ENCODE measurements at regions of chr3 and their contacts with region 1.

Region 1: DNA sequence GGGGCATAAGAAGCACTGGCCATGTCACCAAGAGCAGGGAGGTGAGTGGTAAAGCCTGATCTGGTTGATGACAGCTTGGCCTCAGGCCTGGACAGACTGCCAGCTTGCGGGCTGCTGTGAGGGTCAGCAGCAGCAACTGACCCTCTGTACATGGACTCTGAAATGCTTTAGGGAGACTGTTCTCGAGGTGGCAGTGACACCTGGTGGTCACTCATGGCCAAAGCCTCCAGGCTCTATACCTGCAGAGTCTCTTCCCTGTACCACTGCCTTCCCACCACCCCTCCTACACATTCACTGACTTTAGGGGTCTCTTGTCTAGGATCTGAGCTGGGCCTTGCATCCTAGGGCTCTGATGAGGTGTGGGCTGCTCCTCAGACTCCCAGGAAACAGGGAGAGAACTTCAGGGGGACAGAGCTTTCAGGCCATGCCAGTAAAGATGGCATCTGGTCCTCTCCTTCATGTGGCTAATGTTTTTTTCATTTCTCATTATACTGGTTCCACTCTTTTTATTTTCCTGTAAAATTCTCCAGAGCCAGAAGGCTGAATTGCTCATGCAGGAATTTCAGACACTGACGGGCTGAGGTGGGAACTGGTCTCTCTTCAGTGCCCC is 17.2 kb upstream of the TIMP4 start:
- DNase-seq: peak; percentile 50
- ATAC-seq: peak; percentile 92
- H3K4me3 ChIP-seq: no peak overlapping the region
- H3K27ac ChIP-seq: no peak overlapping the region
- H3K4me1 ChIP-seq: peaks cover 12% of the 10 kb centered on the region
- H3K27me3 ChIP-seq: no peaks in the 10 kb centered on the region
- CTCF ChIP-seq: peak; percentile 77
- POLR2A ChIP-seq: no peak
- RAD21 ChIP-seq: peak; percentile 88

Region 2: DNA sequence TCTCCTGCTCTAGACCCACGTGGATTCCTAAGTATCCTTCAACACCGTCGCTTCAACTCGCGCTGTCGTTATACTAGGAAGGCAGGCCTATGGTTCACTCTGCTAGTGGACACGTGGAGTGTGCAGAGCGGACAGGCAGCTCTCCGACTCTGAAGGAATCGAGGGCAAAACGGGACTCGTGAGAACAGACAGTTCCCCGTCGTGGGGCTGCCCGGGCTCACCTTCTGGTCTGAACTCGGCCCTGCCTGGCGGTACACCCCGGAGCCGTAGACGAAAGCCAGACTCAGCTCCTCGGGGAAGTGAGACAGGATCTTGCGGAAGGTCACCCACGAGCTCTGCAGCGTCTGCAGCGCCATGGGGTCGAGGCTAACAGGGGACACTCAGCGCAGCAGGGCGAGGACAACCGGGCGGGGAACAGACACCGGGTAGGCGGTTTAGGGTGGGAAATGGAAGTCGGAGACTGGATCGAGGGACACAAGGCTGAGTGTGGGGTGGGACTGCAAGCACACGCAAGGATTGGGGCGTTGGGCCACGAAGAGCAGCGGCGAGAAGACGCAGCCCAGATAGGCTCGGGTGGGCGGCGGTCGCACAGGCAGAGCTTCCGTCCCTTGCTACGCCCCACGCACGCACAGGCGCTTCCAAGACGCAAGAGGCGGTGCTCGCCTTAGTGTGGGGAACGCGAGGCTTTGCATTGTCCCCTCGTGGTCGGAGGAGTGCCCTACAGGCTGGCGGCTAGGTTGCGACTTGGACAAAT is 329.5 kb before region 1 on chr3 and contains the start of gene TAMM41:
- CTCF ChIA-PET with region 1: no interaction called
- POLR2A ChIA-PET with region 1: no interaction called
- dilution Hi-C with region 1: no loop called
- in situ Hi-C with region 1: no loop called
- intact Hi-C with region 1: loop called (anchors 5 kb)
- DNase-seq: peak; percentile 87
- ATAC-seq: peak; percentile 100
- H3K4me3 ChIP-seq: peak within 1 kb of the TSS; percentile 89
- H3K27ac ChIP-seq: peak within 1 kb of the TSS; percentile 94
- H3K4me1 ChIP-seq: peaks cover 5% of the 10 kb centered on the region
- H3K27me3 ChIP-seq: peaks cover 2% of the 10 kb centered on the region; the same call in 1 of the 2 replicates
- CTCF ChIP-seq: peak; percentile 80
- POLR2A ChIP-seq: peak; percentile 49; the same call in 1 of the 2 replicates
- RAD21 ChIP-seq: peak; percentile 37
- total RNA-seq, gene TAMM41: 3.9 and 4.3 TPM in 2 replicates

Region 3: GRCh38 chr3:12143949-12144504 is 31.9 kb before region 1 on chr3:
- CTCF ChIA-PET with region 1: interaction called, 25 read pairs
- POLR2A ChIA-PET with region 1: no interaction called
- dilution Hi-C with region 1: no loop called
- in situ Hi-C with region 1: loop called (anchors 5 kb)
- intact Hi-C with region 1: loop called (anchors 1 kb)
- DNase-seq: peak; percentile 81
- ATAC-seq: peak; percentile 87
- H3K4me3 ChIP-seq: no peak overlapping the region
- H3K27ac ChIP-seq: peak overlapping the region; percentile 2; the same call in 1 of the 2 replicates
- H3K4me1 ChIP-seq: peaks cover 4% of the 10 kb centered on the region
- H3K27me3 ChIP-seq: peaks cover 5% of the 10 kb centered on the region; the same call in 1 of the 2 replicates
- CTCF ChIP-seq: no peak
- POLR2A ChIP-seq: no peak
- RAD21 ChIP-seq: peak; percentile 6; the same call in 1 of the 2 replicates

Region 4: GRCh38 chr3:12287727-12288191 is 111.8 kb after region 1 on chr3:
- CTCF ChIA-PET with region 1: no interaction called
- POLR2A ChIA-PET with region 1: no interaction called
- dilution Hi-C with region 1: no loop called
- in situ Hi-C with region 1: no loop called
- intact Hi-C with region 1: loop called (anchors 5 kb)
- DNase-seq: no peak
- ATAC-seq: peak; percentile 87
- H3K4me3 ChIP-seq: peak overlapping the region; percentile 95
- H3K27ac ChIP-seq: peak overlapping the region; percentile 50
- H3K4me1 ChIP-seq: peaks cover 2% of the 10 kb centered on the region
- H3K27me3 ChIP-seq: no peaks in the 10 kb centered on the region
- CTCF ChIP-seq: no peak
- POLR2A ChIP-seq: no peak
- RAD21 ChIP-seq: peak; percentile 38

Region 5: GRCh38 chr3:12484198-12484974 is 308.4 kb after region 1 on chr3 and contains the start of gene TSEN2:
- CTCF ChIA-PET with region 1: interaction called, 19 read pairs
- POLR2A ChIA-PET with region 1: no interaction called
- dilution Hi-C with region 1: no loop called
- in situ Hi-C with region 1: loop called (anchors 10 kb)
- intact Hi-C with region 1: loop called (anchors 1 kb)
- DNase-seq: peak; percentile 94
- ATAC-seq: peak; percentile 96
- H3K4me3 ChIP-seq: peak within 1 kb of the TSS; percentile 78
- H3K27ac ChIP-seq: peak within 1 kb of the TSS; percentile 76
- H3K4me1 ChIP-seq: no peaks in the 10 kb centered on the region; the same call in 1 of the 2 replicates
- H3K27me3 ChIP-seq: no peaks in the 10 kb centered on the region
- CTCF ChIP-seq: peak; percentile 47
- POLR2A ChIP-seq: no peak
- RAD21 ChIP-seq: peak; percentile 54
- total RNA-seq, gene TSEN2: 14.2 and 15.0 TPM in 2 replicates